ENCODE measurements at regions of chr3 and their contacts with region 1.

Region 1: DNA sequence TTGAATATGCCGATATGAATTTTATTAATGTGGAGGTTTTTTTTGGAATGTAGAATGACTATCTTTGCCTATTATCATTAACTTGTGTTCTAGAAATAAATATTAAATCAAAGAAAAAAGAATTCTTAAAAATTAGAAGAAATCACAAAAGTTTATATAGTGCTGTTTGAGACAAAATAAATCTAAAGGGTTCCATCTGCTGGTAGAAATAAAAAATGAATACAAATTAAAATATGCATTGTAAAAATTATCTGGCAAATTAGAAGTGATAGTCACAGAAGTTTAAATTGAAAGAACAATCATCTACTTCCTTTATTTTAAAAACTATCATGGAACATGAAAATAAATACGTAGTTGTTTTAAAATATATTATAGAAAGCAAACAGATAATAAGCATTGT is 22.7 kb upstream of the ZBTB20 start:
- DNase-seq: peak in 1 of 9 experiments; percentile 32
- ATAC-seq: no peak
- H3K4me3 ChIP-seq: no peak overlapping the region
- H3K4me3 Mint-ChIP-seq: no peak overlapping the region
- H3K27ac ChIP-seq: no peak overlapping the region
- H3K27ac Mint-ChIP-seq: no peak overlapping the region
- H3K4me1 ChIP-seq: peaks cover 11% of the 10 kb centered on the region
- H3K4me1 Mint-ChIP-seq: peaks cover 12% of the 10 kb centered on the region
- H3K27me3 ChIP-seq: no peaks in the 10 kb centered on the region
- H3K27me3 Mint-ChIP-seq: no peaks in the 10 kb centered on the region
- CTCF ChIP-seq: peak; percentile 59

Region 2: DNA sequence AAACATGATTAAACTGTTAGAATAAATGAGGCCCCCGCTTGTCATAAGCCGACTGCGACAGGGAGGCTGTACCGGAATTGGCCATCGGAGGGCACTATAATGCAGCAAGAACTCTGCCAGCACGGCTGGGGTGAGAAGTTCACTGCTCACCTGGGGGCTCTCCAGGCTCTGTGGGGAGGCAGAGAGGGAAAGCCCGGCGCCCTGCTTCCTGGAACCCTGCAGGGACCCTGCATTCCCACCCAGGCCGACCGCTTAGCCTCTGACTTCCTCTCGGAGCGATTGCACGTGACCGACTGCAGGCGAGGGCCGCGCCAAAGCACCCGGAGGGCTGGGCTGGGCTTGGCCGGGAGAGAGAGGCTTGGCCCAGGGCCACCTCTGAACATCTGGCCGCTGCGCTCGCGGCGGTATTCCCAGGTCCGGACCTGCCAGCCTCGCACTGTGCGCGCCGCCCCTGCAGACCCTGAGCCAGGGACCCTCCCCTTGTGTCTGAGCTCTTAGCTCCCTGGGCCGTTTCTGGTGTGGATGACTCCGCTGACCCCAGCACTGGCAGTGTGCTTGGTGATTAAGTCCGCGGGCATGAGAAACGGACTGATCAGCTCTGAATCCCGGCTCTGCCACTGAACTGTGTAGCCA is 1017.2 kb before region 1 on chr3:
- CTCF ChIA-PET with region 1: no interaction called
- POLR2A ChIA-PET with region 1: no interaction called
- intact Hi-C with region 1: loop called in 1 of 2 experiments (anchors 5 kb)
- DNase-seq: peak; percentile 76 to 91 (median 87)
- ATAC-seq: peak; percentile 100
- H3K4me3 ChIP-seq: peak overlapping the region; percentile 46 to 50
- H3K4me3 Mint-ChIP-seq: peak overlapping the region; percentile 73
- H3K27ac ChIP-seq: peak overlapping the region in 1 of 2 experiments; percentile 47
- H3K27ac Mint-ChIP-seq: no peak overlapping the region
- H3K4me1 ChIP-seq: peaks cover 8% of the 10 kb centered on the region
- H3K4me1 Mint-ChIP-seq: peaks cover 10% of the 10 kb centered on the region
- H3K27me3 ChIP-seq: no peaks in the 10 kb centered on the region
- H3K27me3 Mint-ChIP-seq: no peaks in the 10 kb centered on the region
- CTCF ChIP-seq: peak; percentile 99

Region 3: GRCh38 chr3:114393367-114394072 is 776.3 kb before region 1 on chr3:
- CTCF ChIA-PET with region 1: no interaction called
- POLR2A ChIA-PET with region 1: no interaction called
- intact Hi-C with region 1: loop called in 1 of 2 experiments (anchors 10 kb)
- DNase-seq: no peak
- ATAC-seq: no peak
- H3K4me3 ChIP-seq: no peak overlapping the region
- H3K4me3 Mint-ChIP-seq: no peak overlapping the region
- H3K27ac ChIP-seq: no peak overlapping the region
- H3K27ac Mint-ChIP-seq: no peak overlapping the region
- H3K4me1 ChIP-seq: peaks cover 6% of the 10 kb centered on the region
- H3K4me1 Mint-ChIP-seq: peaks cover 28% of the 10 kb centered on the region
- H3K27me3 ChIP-seq: no peaks in the 10 kb centered on the region
- H3K27me3 Mint-ChIP-seq: no peaks in the 10 kb centered on the region
- CTCF ChIP-seq: no peak

Region 4: GRCh38 chr3:115040673-115041286 is 129.0 kb before region 1 on chr3:
- CTCF ChIA-PET with region 1: interaction called, 12 read pairs
- POLR2A ChIA-PET with region 1: no interaction called
- intact Hi-C with region 1: loop called (anchors 1 to 2 kb)
- DNase-seq: peak in 8 of 9 experiments; percentile 1 to 62 (median 33)
- ATAC-seq: peak; percentile 69
- H3K4me3 ChIP-seq: no peak overlapping the region
- H3K4me3 Mint-ChIP-seq: no peak overlapping the region
- H3K27ac ChIP-seq: no peak overlapping the region
- H3K27ac Mint-ChIP-seq: no peak overlapping the region
- H3K4me1 ChIP-seq: no peaks in the 10 kb centered on the region
- H3K4me1 Mint-ChIP-seq: peaks cover 12% of the 10 kb centered on the region
- H3K27me3 ChIP-seq: no peaks in the 10 kb centered on the region
- H3K27me3 Mint-ChIP-seq: no peaks in the 10 kb centered on the region
- CTCF ChIP-seq: peak; percentile 70

Region 5: GRCh38 chr3:115099986-115100571 is 69.7 kb before region 1 on chr3:
- CTCF ChIA-PET with region 1: interaction called, 124 read pairs
- POLR2A ChIA-PET with region 1: interaction called, 11 read pairs
- intact Hi-C with region 1: loop called in 1 of 2 experiments (anchors 1 kb)
- DNase-seq: peak in 6 of 9 experiments; percentile 20 to 81 (median 49)
- ATAC-seq: peak; percentile 84
- H3K4me3 ChIP-seq: peak overlapping the region; percentile 40 to 42
- H3K4me3 Mint-ChIP-seq: peak overlapping the region; percentile 83
- H3K27ac ChIP-seq: peak overlapping the region; percentile 7 to 56
- H3K27ac Mint-ChIP-seq: peak overlapping the region; percentile 91
- H3K4me1 ChIP-seq: peaks cover 18% of the 10 kb centered on the region
- H3K4me1 Mint-ChIP-seq: peaks cover 58% of the 10 kb centered on the region
- H3K27me3 ChIP-seq: no peaks in the 10 kb centered on the region
- H3K27me3 Mint-ChIP-seq: no peaks in the 10 kb centered on the region
- CTCF ChIP-seq: no peak

Region 6: GRCh38 chr3:115226844-115227445 is 57.1 kb after region 1 on chr3:
- CTCF ChIA-PET with region 1: no interaction called
- POLR2A ChIA-PET with region 1: no interaction called
- intact Hi-C with region 1: no loop called
- DNase-seq: no peak
- ATAC-seq: no peak
- H3K4me3 ChIP-seq: no peak overlapping the region
- H3K4me3 Mint-ChIP-seq: no peak overlapping the region
- H3K27ac ChIP-seq: no peak overlapping the region
- H3K27ac Mint-ChIP-seq: no peak overlapping the region
- H3K4me1 ChIP-seq: no peaks in the 10 kb centered on the region
- H3K4me1 Mint-ChIP-seq: no peaks in the 10 kb centered on the region
- H3K27me3 ChIP-seq: no peaks in the 10 kb centered on the region
- H3K27me3 Mint-ChIP-seq: no peaks in the 10 kb centered on the region
- CTCF ChIP-seq: no peak

Region 7: GRCh38 chr3:115819785-115820384 is 650.1 kb after region 1 on chr3:
- CTCF ChIA-PET with region 1: interaction called, 4 read pairs
- POLR2A ChIA-PET with region 1: no interaction called
- intact Hi-C with region 1: loop called in 1 of 2 experiments (anchors 5 kb)
- DNase-seq: peak; percentile 26 to 88 (median 56)
- ATAC-seq: peak; percentile 91
- H3K4me3 ChIP-seq: no peak overlapping the region
- H3K4me3 Mint-ChIP-seq: no peak overlapping the region
- H3K27ac ChIP-seq: no peak overlapping the region
- H3K27ac Mint-ChIP-seq: no peak overlapping the region
- H3K4me1 ChIP-seq: no peaks in the 10 kb centered on the region
- H3K4me1 Mint-ChIP-seq: no peaks in the 10 kb centered on the region
- H3K27me3 ChIP-seq: peaks cover 0 to 3% of the 10 kb centered on the region in 2 experiments
- H3K27me3 Mint-ChIP-seq: no peaks in the 10 kb centered on the region
- CTCF ChIP-seq: peak; percentile 100